HEK293T (cell line): ENCODE measurements at regions of chr1 and their contacts with region 1.

Region 1: GRCh38 chr1:22876359-22877111 is 96.1 kb downstream of the LACTBL1 start:
- DNase-seq: no peak

Region 2: GRCh38 chr1:22861764-22862440 is 14.6 kb before region 1 on chr1:
- CTCF ChIA-PET with region 1: interaction called, 10 read pairs
- POLR2A ChIA-PET with region 1: no interaction called
- DNase-seq: peak; percentile 70